Aorta (tissue), 5 donors: ENCODE measurements at regions of chr2 and their contacts with region 1.

Region 1: DNA sequence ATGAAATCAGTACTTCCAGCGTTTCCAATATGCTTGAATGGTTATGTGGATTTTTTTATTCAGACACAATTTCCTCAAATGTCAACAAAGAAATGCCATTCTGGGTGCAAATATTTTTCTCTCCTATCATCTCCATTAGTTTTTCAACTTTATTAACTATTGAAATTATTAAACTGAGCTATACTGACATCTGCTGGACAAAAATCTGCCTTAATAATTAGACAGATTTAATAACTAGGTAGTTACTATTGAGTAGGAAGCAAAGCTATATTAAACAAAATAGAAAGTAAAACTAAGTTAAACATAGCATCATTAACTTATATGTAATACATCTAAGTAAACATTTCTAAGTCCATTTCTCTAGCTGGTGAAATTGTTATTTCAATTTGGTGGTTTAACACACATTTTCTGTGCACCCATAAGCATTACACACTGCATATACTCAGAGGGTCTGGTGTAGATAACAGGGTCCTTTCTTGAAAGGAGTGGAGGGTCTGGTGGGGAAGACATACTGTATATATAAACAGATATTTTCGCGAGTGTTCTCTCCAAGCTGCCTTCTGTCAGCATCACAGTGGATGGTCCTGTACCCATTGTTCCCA is 77.0 kb downstream of the LANCL1 start:
- DNase-seq: no peak
- ATAC-seq: no peak
- H3K4me3 ChIP-seq: no peak overlapping the region
- H3K27ac ChIP-seq: no peak overlapping the region
- H3K4me1 ChIP-seq: no peaks in the 10 kb centered on the region
- H3K27me3 ChIP-seq: no peaks in the 10 kb centered on the region

Region 2: DNA sequence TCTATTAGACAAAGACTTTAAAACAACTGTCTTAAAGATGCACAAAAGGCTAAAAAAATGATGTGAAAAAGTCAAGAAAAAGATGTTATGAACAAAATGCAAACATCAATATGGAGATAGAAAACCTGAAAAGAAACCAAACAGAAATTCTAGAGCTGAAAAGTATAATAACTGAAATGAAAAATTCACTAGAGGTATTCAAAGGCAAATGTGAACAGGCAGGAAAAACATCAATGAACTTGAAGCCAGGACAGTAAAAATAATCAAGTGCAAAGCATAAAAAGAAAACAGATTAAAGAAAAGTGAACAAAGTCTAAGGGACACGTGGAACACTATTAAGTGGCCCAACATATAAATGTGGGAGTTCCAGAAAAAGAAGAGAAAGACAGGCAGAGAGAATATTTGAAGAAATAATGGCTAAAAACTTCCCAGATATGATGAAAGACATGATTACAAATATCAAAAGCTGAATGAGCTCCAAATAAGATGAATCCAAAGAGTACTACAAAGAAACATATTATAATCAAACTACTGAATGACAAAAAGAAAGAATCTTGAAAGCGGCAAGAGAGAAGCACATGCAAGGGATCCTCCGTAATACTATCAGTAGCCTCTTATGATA is 285.8 kb before region 1 on chr2:
- intact Hi-C with region 1: no loop called
- DNase-seq: no peak
- ATAC-seq: no peak
- H3K4me3 ChIP-seq: no peak overlapping the region
- H3K27ac ChIP-seq: no peak overlapping the region
- H3K4me1 ChIP-seq: no peaks in the 10 kb centered on the region
- H3K27me3 ChIP-seq: no peaks in the 10 kb centered on the region

Region 3: DNA sequence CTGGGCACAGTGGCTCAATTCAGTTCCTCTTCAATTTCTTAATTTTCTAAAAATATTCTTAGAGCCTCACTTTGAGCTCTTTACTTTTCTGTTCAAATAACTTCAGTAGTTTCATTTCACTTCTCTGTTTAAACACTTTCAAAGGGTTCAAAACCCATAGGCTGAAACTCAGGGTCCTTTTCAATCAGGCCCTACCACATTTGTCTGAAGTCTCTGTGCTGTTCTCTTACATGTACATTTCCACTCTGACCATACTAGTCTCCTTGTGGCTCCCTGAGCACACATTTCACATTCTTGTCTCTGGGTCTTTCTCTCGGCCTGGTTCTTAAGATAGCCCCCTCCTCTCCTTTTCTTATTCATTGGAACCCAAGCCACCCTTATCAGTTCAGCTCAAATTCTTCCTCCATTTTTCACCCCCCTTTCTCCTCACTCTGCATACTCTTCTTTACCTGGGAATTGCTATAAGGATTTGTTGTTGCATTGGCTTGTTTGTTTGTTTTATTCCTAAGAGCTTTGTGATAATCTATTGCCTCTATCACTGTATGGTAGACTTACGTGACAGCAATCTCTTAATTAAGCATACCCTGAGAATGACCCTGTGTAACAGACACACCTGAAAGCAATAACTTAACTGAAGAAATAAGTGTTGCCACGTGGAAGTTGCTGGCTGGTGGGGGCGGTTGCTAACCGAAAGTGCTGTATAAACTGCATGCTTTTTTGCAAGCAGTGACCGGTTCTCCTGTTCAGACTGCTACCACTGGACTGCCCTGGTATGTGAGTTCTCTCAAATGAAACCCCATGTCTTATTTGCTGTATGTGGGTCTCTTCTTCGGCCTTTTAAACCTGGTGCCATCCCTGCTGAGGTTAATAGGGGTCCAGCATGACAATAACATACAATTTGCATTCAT is 146.6 kb before region 1 on chr2:
- intact Hi-C with region 1: loop called (anchors 2 kb)
- DNase-seq: no peak
- ATAC-seq: no peak
- H3K4me3 ChIP-seq: no peak overlapping the region
- H3K27ac ChIP-seq: no peak overlapping the region
- H3K4me1 ChIP-seq: no peaks in the 10 kb centered on the region
- H3K27me3 ChIP-seq: no peaks in the 10 kb centered on the region